ENCODE measurements at regions of chr19 and their contacts with region 1.

Region 1: GRCh38 chr19:18469069-18469846 is 31.3 kb upstream of the ISYNA1 start:
- DNase-seq: peak; percentile 85

Region 2: DNA sequence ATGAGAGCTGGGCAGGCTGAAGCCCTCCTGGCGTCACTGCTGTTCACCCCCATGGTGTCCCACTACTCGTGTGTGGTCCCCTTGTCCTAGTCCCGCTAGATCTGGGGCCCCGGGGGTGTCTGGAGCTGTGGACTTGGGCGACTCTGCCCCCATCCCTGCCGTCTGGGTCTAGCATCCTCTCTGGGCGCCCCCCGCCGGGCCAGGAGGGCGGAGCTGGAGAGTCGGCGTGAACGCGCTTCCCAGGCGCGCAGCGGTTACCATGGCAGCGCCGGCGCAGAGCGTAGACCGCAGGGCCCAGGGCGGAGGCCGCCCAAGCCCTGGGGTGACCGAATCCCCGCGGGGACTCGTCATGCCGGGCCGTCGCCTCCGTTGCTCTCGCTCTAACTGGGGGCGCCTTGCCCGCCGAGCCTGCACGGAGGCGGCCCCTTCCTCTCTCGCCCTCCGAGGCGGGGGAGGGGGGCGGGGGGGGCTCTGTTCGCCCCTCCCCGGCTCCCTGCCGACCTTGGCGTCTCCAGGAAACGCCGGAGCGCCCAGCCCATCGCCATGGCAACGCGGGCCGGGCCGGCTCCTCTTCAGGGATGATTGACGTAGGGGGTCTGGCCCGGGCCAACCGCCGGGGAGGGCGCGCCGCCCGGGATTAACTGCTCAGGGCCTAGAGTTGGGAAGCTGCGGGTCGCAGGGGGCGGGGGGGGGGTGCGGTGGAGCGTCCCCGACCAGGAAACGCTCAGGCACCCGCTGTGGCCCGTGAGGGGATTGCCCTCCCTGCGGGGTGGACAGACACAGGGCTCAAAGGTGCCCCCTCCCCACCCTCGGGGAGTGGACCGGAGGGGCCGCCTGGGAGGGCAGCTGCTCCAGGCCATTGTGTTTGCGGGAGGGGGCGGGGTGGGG is 40.2 kb before region 1 on chr19:
- intact Hi-C with region 1: no loop called
- DNase-seq: peak; percentile 84

Region 3: GRCh38 chr19:18507021-18507726 is 37.9 kb after region 1 on chr19:
- intact Hi-C with region 1: loop called (anchors 5 kb)
- DNase-seq: no peak

Region 4: DNA sequence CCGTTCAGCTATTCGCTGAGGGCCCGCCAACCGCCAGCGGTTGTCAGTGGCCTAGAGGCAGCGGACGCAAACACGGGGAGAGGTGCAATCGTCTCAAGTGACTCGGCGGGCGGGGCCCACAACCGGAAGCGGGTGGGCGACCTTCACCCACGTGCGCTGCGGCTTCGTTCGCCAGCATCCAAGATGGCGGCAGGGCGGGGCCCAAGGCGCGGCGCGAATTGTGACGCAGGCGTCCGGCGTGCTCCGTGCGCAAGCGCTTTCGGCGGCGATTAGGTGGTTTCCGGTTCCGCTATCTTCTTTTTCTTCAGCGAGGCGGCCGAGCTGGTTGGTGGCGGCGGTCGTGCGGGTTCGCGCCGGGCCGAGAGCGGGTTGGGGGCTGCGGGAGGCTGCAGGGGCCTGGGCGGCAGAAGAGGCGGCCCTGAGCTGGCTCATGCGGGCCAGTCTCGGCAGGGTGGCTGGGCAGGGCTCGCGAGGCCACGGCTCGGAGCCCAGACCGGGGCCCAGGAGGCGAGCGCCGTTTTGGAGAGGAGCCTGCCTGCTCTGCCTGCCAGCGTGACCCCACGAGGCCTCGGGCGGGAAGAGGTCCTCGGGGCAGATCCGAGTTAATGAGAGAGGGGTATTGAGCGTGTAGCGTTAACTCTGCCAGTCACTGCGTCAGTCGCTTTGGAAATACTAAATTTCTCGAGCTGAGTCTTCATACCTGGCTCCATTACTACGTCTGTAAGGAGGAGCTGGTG is 102.5 kb after region 1 on chr19 and contains the start of gene UBA52:
- intact Hi-C with region 1: loop called (anchors 5 kb)
- DNase-seq: peak; percentile 98
- total RNA-seq, gene UBA52: 573 TPM

Region 5: GRCh38 chr19:18588611-18589379 is 119.5 kb after region 1 on chr19 and contains the start of gene REX1BD:
- intact Hi-C with region 1: loop called (anchors 5 kb)
- DNase-seq: peak; percentile 93
- total RNA-seq, gene REX1BD: 58.9 TPM

Region 6: GRCh38 chr19:18657590-18658365 is 188.5 kb after region 1 on chr19:
- intact Hi-C with region 1: loop called (anchors 10 kb)
- DNase-seq: no peak

Region 7: GRCh38 chr19:18846862-18847548 is 377.7 kb after region 1 on chr19:
- intact Hi-C with region 1: loop called (anchors 5 kb)
- DNase-seq: peak; percentile 92

Measured in cardiac septum (tissue), 1 donor.